ENCODE measurements at regions of chr1 and their contacts with region 1.

Region 1: GRCh38 chr1:67500413-67500959 is 70.3 kb upstream of the SERBP1 start:
- DNase-seq: peak; percentile 59
- H3K4me3 ChIP-seq: no peak overlapping the region
- H3K27ac ChIP-seq: no peak overlapping the region
- H3K27me3 ChIP-seq: peaks cover 3% of the 10 kb centered on the region
- CTCF ChIP-seq: peak; percentile 99

Region 2: GRCh38 chr1:67149179-67149770 is 351.2 kb before region 1 on chr1:
- CTCF ChIA-PET with region 1: interaction called, 11 read pairs
- POLR2A ChIA-PET with region 1: no interaction called
- DNase-seq: peak; percentile 66
- H3K4me3 ChIP-seq: no peak overlapping the region
- H3K27ac ChIP-seq: no peak overlapping the region
- H3K27me3 ChIP-seq: peaks cover 5% of the 10 kb centered on the region
- CTCF ChIP-seq: peak; percentile 91

Region 3: DNA sequence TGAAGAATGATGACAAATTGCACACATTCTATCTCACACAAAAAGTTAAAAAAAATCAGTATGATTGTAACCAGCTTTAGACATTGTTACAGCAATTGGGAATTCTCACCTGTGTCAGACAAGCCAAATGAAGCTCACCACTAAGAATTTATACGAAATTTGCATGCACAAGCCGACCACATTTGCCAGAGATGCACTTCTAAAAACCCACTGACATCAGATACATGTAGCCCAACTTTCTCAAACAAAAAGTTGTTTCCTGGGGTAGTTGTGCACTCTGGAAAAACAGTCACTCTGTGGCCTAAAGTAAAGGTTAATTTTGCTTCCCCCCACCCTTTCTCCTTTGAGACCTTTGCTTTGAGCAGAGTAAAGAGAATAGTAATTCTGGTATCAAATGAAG is 260.7 kb before region 1 on chr1:
- CTCF ChIA-PET with region 1: interaction called, 30 read pairs
- POLR2A ChIA-PET with region 1: no interaction called
- DNase-seq: no peak
- H3K4me3 ChIP-seq: no peak overlapping the region
- H3K27ac ChIP-seq: no peak overlapping the region
- H3K27me3 ChIP-seq: peaks cover 11% of the 10 kb centered on the region
- CTCF ChIP-seq: no peak

Region 4: DNA sequence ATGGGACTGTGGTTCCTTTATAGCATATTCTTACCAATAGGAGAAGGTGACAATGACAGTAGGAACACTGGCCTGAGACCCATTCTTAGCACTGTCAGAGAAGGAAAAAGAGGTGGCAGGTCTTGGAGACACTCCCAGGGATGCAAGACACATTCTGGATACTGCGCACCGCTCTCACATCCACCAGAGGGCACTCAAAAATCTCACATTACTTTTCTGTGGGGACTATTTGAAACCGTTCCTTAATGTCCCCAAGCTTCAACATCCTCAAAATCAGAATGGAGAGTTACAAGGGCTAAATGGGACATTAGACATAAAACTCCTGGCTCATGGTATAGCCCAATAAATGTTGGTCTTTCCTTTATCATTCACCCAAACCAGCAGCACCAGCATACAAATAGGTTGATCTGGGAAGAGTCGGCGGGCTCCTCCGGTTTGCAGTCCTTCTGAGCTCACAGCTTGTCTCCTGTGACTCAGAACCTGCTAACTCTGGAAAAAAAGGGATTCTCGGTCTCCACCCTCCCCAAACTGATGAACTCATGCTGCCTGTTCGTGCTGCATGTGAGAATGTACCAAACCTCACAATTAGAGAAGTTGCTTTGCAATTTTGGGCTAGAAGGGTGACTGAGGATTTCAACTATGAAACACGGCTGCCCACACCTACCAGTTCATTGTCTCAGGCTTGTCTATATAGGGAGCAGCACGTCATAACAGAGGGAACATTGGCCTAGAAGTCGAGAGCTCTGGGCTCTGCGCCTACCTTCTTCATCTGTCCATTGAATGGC is 152.6 kb before region 1 on chr1:
- CTCF ChIA-PET with region 1: interaction called, 218 read pairs
- POLR2A ChIA-PET with region 1: no interaction called
- DNase-seq: no peak
- H3K4me3 ChIP-seq: no peak overlapping the region
- H3K27ac ChIP-seq: no peak overlapping the region
- H3K27me3 ChIP-seq: no peaks in the 10 kb centered on the region
- CTCF ChIP-seq: peak; percentile 90

Region 5: DNA sequence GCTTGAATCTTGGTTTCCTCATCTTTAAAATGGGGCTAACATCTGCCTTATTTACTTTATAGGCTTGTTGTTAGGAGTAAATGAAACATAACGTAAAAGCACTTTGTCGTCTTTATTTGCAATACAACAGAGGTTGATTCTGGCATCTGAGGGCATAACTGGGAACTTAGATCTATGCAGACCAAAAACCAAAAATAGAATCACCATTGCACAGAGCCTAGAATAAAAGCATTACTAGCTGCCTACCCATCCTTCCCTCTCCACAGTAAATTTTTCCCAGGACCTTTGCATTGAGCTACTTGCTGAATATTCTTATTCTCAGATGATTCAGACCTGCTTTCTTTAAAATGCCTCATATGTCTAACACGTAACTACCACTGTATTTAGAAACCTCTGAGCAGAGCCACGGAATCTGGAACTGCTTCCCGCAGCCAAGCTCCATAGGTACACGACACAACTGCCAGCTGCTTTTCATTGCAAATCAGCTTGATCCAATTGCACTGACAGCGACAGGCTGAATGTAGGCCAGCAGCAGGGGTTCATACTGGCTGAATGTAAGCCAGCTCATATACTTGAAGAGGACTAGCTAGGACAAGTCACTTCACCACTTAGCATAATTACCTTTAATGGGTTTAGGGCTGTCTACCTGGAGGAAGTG is 37.1 kb before region 1 on chr1:
- CTCF ChIA-PET with region 1: interaction called, 11 read pairs
- POLR2A ChIA-PET with region 1: no interaction called
- DNase-seq: no peak
- H3K4me3 ChIP-seq: no peak overlapping the region
- H3K27ac ChIP-seq: no peak overlapping the region
- H3K27me3 ChIP-seq: peaks cover 14% of the 10 kb centered on the region
- CTCF ChIP-seq: no peak

Region 6: DNA sequence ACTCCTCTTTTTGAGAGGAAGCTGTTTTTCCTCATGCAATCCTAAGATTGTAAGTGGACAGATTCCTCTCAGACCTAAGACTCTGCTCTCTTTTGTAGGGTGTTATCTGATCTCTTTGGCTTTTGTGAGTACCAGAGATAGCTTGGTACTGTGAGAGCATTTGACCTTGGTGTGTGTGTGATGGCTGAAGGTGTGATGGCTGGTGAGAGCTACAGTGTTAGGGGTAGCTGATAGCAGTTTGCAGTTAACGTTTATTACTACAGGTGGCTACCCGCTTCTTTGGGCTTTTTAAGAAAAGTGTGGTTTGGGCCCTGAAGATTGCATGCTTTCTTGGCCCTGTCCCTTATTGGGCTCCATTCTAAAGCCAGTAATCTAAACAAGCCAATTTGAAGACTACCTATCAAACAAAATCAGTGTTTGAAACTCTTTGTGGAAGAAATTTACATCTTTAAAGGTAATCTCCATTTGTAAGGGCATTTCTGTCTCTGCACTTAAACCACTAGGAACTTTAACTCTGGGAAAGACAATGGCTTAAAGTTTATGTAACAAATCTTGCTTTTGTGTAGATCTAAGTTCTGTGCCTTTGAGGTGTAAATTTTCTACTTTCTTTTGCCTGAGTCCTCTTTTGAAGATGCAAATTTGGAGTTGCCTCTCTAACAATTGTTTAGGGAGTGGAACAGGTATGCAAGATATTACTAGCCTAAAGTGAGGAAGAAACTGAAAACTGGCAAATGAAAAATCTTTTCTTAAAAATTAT is 15.0 kb after region 1 on chr1:
- CTCF ChIA-PET with region 1: interaction called, 15 read pairs
- POLR2A ChIA-PET with region 1: no interaction called
- DNase-seq: no peak
- H3K4me3 ChIP-seq: no peak overlapping the region
- H3K27ac ChIP-seq: no peak overlapping the region
- H3K27me3 ChIP-seq: peaks cover 15% of the 10 kb centered on the region
- CTCF ChIP-seq: no peak

Measured in AG04450 (cell line).